Activated CD8-positive, alpha-beta T cell treated with anti-CD3 and anti-CD28 coated beads for 36 hours (primary cell): ENCODE measurements at regions of chr17 and their contacts with region 1.

Region 1: DNA sequence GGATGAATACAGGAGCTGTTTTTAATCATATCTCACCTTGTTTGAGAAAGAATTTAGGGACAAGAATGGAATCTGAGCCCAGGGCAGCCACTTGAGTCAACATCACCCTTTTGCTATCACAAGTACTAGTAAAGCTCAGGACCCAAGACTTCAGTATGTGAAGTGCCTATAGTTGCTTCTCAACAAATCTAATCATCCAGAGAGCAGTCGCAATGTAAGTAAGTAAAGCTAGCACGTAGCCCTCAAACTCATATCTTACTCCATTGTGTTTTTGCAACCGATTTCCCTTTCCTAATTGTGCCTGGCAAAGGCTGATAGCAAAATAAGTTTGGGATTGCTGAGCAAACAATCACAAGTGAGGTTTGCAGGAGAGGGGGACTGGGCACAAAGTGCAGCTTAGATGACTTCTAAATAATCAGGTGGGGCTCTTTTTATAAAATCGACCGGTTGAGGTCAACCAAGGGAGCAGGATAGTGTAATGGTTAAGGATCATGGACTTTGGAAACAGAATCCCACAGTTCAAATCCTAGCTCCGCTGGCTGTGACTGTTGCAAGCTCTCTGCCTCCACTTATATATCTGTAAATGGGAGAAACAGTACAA is 13.0 kb downstream of the TOB1 start:
- DNase-seq: no peak
- ATAC-seq: no peak
- H3K4me3 Mint-ChIP-seq: no peak overlapping the region
- H3K27ac Mint-ChIP-seq: no peak overlapping the region
- H3K4me1 Mint-ChIP-seq: peaks cover 13% of the 10 kb centered on the region
- H3K27me3 Mint-ChIP-seq: no peaks in the 10 kb centered on the region
- CTCF ChIP-seq: no peak

Region 2: DNA sequence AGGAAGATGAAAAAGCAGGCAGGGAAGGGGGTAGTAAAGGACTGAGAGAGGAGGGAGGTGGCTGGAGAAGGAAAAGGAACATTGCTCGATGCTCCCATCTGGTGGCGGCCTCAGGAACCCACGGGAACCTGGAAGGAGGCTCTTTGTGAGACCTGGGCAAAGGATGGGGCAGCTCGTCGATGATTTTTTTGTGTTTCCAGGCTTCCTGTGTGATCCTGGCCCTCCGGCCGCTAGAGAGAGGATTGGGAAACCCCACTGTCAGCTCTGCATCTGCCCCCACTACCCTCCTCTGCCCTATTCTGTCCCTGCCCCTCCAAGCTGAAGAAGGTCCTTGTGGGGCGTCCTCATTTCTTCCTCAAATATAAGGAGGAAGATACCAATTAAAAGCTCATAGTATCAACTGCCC is 11.2 kb before region 1 on chr17:
- CTCF ChIA-PET with region 1: interaction called, 19 read pairs
- POLR2A ChIA-PET with region 1: no interaction called
- intact Hi-C with region 1: no loop called
- DNase-seq: peak; percentile 73
- ATAC-seq: peak; percentile 86
- H3K4me3 Mint-ChIP-seq: no peak overlapping the region
- H3K27ac Mint-ChIP-seq: no peak overlapping the region
- H3K4me1 Mint-ChIP-seq: no peaks in the 10 kb centered on the region
- H3K27me3 Mint-ChIP-seq: no peaks in the 10 kb centered on the region
- CTCF ChIP-seq: peak; percentile 61

Region 3: GRCh38 chr17:50944054-50944901 is 91.2 kb after region 1 on chr17:
- CTCF ChIA-PET with region 1: interaction called, 63 read pairs
- POLR2A ChIA-PET with region 1: interaction called, 3 read pairs
- intact Hi-C with region 1: no loop called
- DNase-seq: peak; percentile 89
- ATAC-seq: peak; percentile 88
- H3K4me3 Mint-ChIP-seq: peak overlapping the region; percentile 79
- H3K27ac Mint-ChIP-seq: peak overlapping the region; percentile 86
- H3K4me1 Mint-ChIP-seq: peaks cover 25% of the 10 kb centered on the region
- H3K27me3 Mint-ChIP-seq: no peaks in the 10 kb centered on the region
- CTCF ChIP-seq: no peak

Region 4: DNA sequence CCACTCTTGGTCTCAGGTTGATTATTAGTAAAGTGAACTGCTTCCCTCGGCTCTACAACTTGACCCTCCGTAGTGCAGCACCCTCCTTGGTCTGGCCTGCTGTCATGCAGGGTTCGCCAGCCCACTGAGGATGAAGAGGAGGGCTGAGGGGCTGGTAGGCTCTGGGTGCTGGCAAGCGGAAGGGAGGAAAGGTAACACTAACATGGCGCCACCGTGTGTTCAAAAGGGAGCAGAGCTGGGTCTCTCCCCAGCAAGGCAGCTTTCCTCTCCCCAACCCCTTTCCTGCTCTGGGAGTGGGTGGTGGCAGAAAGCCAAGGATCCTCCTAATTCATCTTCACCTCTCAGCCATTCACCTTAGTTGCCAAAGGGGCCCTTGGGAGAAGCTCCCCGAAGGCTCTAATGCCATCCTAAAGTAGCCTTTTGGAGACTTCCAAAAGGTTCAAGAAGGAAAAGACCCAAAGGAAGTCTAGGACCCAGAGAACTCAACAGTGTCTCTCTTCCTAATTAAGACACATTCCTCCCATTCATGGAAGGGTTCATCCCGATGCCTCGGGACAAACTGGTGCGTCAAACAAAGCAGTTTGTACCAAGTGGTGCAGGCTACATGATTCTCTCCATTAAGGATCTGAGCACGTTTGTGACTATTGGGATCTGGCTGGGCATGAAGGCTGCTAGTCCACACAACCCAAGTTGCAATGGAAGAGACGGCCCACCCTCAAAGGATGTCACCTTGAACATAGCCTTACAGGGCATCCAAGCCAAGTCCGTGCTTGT is 103.8 kb after region 1 on chr17:
- CTCF ChIA-PET with region 1: interaction called, 132 read pairs
- POLR2A ChIA-PET with region 1: interaction called, 14 read pairs
- intact Hi-C with region 1: loop called (anchors 2 kb)
- DNase-seq: peak; percentile 76
- ATAC-seq: peak; percentile 94
- H3K4me3 Mint-ChIP-seq: no peak overlapping the region
- H3K27ac Mint-ChIP-seq: no peak overlapping the region
- H3K4me1 Mint-ChIP-seq: peaks cover 2% of the 10 kb centered on the region
- H3K27me3 Mint-ChIP-seq: no peaks in the 10 kb centered on the region
- CTCF ChIP-seq: peak; percentile 79